ENCODE measurements at regions of chrX and their contacts with region 1.

Region 1: DNA sequence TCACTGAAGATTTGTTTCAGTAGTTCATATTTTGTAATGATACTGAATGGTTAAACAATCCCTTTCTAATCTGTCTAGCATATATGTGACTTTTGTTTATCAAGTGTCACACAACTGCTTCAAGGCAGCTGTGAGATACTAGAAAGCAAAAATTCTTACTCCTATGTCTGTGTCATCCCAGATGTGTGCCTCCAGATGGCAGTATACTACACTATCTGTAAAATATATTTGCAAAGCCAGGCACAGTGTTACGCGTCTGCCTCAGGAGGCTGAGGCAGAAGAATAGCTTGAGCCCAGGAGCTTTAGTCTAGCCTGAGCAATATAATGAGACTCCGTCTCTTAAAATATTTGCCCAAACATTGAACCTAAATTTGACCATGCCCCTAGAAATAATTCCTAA is 4.0 kb downstream of the NUDT10 start:
- DNase-seq: peak; percentile 28 to 54 (median 30)
- H3K4me3 ChIP-seq: no peak overlapping the region
- H3K4me3 Mint-ChIP-seq: no peak overlapping the region
- H3K27ac ChIP-seq: no peak overlapping the region
- H3K27ac Mint-ChIP-seq: peak overlapping the region in 1 of 7 donors; percentile 47
- H3K4me1 ChIP-seq: no peaks in the 10 kb centered on the region
- H3K4me1 Mint-ChIP-seq: peaks cover 2 to 5% (median 4%) of the 10 kb centered on the region in 4 donors
- H3K27me3 ChIP-seq: no peaks in the 10 kb centered on the region
- H3K27me3 Mint-ChIP-seq: peaks cover 0 to 2% of the 10 kb centered on the region in 2 donors

Region 2: GRCh38 chrX:51047836-51048349 is 288.7 kb before region 1 on chrX:
- CTCF ChIA-PET with region 1: no interaction called
- POLR2A ChIA-PET with region 1: no interaction called
- intact Hi-C with region 1: no loop called
- DNase-seq: no peak
- H3K4me3 ChIP-seq: no peak overlapping the region
- H3K4me3 Mint-ChIP-seq: no peak overlapping the region
- H3K27ac ChIP-seq: no peak overlapping the region
- H3K27ac Mint-ChIP-seq: no peak overlapping the region
- H3K4me1 ChIP-seq: no peaks in the 10 kb centered on the region
- H3K4me1 Mint-ChIP-seq: no peaks in the 10 kb centered on the region
- H3K27me3 ChIP-seq: no peaks in the 10 kb centered on the region
- H3K27me3 Mint-ChIP-seq: peaks cover 3% of the 10 kb centered on the region in 2 donors

Region 3: DNA sequence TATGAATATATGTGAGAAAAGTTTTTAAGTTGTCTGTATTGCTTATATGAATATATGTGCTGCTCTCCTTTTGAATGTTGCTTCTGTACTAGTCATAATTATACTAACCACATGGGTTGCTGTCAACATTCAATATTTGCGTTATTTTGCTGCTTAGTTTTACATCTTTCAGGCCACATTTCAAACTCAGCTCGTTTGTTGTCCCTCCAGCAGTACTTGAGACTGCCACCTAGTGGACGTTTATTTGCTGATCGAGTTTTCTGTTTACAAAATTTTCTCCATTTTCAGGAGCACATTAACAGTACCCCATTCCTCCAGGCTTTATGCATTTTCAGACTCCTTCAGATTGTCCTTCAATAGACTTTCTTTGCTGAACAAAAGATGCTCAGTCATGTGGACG is 84.0 kb after region 1 on chrX:
- CTCF ChIA-PET with region 1: interaction called, 92 read pairs
- POLR2A ChIA-PET with region 1: interaction called, 5 read pairs
- intact Hi-C with region 1: loop called (anchors 1 kb)
- DNase-seq: peak; percentile 44 to 50 (median 46)
- H3K4me3 ChIP-seq: no peak overlapping the region
- H3K4me3 Mint-ChIP-seq: no peak overlapping the region
- H3K27ac ChIP-seq: no peak overlapping the region
- H3K27ac Mint-ChIP-seq: no peak overlapping the region
- H3K4me1 ChIP-seq: no peaks in the 10 kb centered on the region
- H3K4me1 Mint-ChIP-seq: peaks cover 0 to 2% (median 1%) of the 10 kb centered on the region in 4 donors
- H3K27me3 ChIP-seq: no peaks in the 10 kb centered on the region
- H3K27me3 Mint-ChIP-seq: no peaks in the 10 kb centered on the region